ENCODE measurements at regions of chrX and their contacts with region 1.

Region 1: DNA sequence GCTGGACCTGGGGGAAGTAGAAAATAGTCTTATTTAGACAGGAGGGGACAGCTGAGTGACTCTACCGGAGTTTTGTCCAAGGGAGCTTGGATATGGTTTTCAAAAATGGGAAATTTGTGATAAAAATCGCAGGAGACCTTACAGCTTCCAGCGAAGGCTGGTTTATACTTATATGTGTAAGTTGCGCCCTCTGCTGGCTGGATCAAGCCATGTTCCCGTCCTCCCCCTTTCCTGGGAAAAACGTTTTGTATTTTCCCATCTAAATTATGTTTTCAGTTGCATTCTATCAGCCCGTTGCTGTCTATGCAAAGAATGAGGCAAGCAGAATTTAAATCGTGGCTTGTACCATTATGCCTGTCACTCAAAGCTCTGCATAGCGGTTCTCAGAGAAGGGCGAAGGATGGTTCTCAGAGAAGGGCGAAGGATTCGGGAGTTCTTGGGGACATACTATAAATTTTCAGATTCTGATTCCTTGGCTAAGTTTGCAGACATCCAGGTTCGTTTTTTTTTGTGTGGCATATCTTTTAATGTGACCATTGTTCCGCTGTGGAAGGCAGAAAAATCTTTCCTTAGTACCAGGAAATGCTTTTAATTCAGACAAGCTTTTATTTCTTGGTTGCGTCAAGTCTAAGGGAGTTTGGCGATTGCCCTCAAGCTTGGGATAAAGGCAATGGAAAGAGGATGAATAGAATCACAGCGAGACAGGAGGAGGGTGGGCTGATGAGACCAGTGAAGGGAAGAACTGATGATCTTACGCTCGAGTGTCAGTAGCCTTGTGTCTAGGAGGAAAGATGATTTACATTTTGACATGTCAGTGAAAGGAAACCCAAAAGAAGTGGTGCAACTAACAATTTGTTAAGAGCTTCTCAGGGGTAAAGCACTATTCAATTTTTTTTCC is 128.5 kb upstream of the ARX start:
- DNase-seq: peak in 6 of 9 donors; percentile 5 to 23 (median 12)
- ATAC-seq: no peak
- H3K4me3 ChIP-seq: no peak overlapping the region
- H3K4me3 Mint-ChIP-seq: peak overlapping the region in 1 of 10 donors; percentile 14
- H3K27ac ChIP-seq: no peak overlapping the region
- H3K27ac Mint-ChIP-seq: no peak overlapping the region
- H3K4me1 ChIP-seq: no peaks in the 10 kb centered on the region
- H3K4me1 Mint-ChIP-seq: peaks cover 0 to 7% (median 0%) of the 10 kb centered on the region in 7 donors
- H3K27me3 ChIP-seq: no peaks in the 10 kb centered on the region
- H3K27me3 Mint-ChIP-seq: peaks cover under 1 to 15% (median 5%) of the 10 kb centered on the region in 5 donors

Region 2: GRCh38 chrX:24100713-24101112 is 1043.6 kb before region 1 on chrX:
- CTCF ChIA-PET with region 1: no interaction called
- POLR2A ChIA-PET with region 1: no interaction called
- intact Hi-C with region 1: no loop called
- DNase-seq: no peak
- ATAC-seq: no peak
- H3K4me3 ChIP-seq: no peak overlapping the region
- H3K4me3 Mint-ChIP-seq: no peak overlapping the region
- H3K27ac ChIP-seq: no peak overlapping the region
- H3K27ac Mint-ChIP-seq: no peak overlapping the region
- H3K4me1 ChIP-seq: no peaks in the 10 kb centered on the region
- H3K4me1 Mint-ChIP-seq: peaks cover 0 to 13% (median 0%) of the 10 kb centered on the region in 7 donors
- H3K27me3 ChIP-seq: no peaks in the 10 kb centered on the region
- H3K27me3 Mint-ChIP-seq: no peaks in the 10 kb centered on the region

Region 3: DNA sequence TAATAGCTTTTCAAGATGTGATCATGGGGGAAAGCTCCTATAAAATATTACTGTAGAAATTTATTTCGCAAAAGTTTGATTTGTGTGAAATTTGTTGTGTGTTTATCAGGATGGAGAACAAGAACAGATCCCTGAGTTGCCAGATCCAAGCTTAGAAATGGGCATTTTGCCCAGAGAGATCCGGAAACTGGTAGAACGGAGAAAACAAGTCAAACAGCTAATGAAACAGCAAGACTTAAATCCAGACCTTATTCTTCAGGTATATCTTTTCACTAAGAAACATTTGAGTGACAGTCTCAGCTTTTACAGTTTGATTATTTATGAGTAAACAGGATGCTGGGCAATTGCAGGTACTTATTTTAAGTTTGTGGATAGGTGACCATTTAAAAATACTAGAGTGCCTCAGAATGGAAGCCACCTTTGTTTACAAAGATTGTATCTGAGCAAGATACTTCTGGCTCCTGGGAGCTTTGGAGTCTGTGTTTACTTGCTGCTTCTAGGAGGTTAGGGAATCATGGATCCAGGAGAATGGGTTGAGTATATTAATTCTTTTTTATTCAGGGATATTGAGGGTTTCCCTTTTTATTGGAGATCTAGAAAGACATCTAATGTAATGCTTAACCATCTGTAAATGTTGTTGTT is 396.0 kb before region 1 on chrX:
- CTCF ChIA-PET with region 1: interaction called, 4 read pairs
- POLR2A ChIA-PET with region 1: no interaction called
- intact Hi-C with region 1: loop called in 1 of 2 experiments (anchors 1 kb)
- DNase-seq: no peak
- ATAC-seq: no peak
- H3K4me3 ChIP-seq: no peak overlapping the region
- H3K4me3 Mint-ChIP-seq: no peak overlapping the region
- H3K27ac ChIP-seq: no peak overlapping the region
- H3K27ac Mint-ChIP-seq: no peak overlapping the region
- H3K4me1 ChIP-seq: no peaks in the 10 kb centered on the region
- H3K4me1 Mint-ChIP-seq: no peaks in the 10 kb centered on the region
- H3K27me3 ChIP-seq: no peaks in the 10 kb centered on the region
- H3K27me3 Mint-ChIP-seq: no peaks in the 10 kb centered on the region

Region 4: GRCh38 chrX:24838629-24839028 is 305.7 kb before region 1 on chrX:
- CTCF ChIA-PET with region 1: interaction called, 9 read pairs
- POLR2A ChIA-PET with region 1: no interaction called
- intact Hi-C with region 1: loop called in 1 of 2 experiments (anchors 1 kb)
- DNase-seq: peak in 4 of 9 donors; percentile 4 to 27 (median 18)
- ATAC-seq: no peak
- H3K4me3 ChIP-seq: no peak overlapping the region
- H3K4me3 Mint-ChIP-seq: no peak overlapping the region
- H3K27ac ChIP-seq: no peak overlapping the region
- H3K27ac Mint-ChIP-seq: no peak overlapping the region
- H3K4me1 ChIP-seq: no peaks in the 10 kb centered on the region
- H3K4me1 Mint-ChIP-seq: no peaks in the 10 kb centered on the region
- H3K27me3 ChIP-seq: no peaks in the 10 kb centered on the region
- H3K27me3 Mint-ChIP-seq: no peaks in the 10 kb centered on the region

Region 5: DNA sequence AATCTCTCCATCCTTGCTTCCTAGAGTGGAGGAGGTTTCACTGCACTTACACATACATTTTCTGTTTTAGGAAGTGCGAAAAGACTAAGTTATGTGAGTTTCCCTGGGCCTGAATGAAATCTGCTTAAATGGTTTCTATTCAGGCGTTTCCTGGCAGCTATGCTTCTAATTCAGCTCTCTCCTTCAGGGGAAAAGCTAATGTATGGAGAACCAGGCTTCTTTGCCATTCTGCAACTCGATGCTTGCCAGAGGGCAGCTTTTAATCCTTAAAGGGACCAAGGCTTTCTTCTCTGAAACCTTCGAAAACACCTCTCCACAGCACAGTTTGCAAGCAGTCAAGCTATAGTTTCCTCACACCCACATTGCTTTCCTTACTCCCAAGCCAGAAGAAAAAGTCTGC is 39.1 kb before region 1 on chrX:
- CTCF ChIA-PET with region 1: no interaction called
- POLR2A ChIA-PET with region 1: no interaction called
- intact Hi-C with region 1: no loop called
- DNase-seq: no peak
- ATAC-seq: no peak
- H3K4me3 ChIP-seq: no peak overlapping the region
- H3K4me3 Mint-ChIP-seq: no peak overlapping the region
- H3K27ac ChIP-seq: no peak overlapping the region
- H3K27ac Mint-ChIP-seq: no peak overlapping the region
- H3K4me1 ChIP-seq: no peaks in the 10 kb centered on the region
- H3K4me1 Mint-ChIP-seq: no peaks in the 10 kb centered on the region
- H3K27me3 ChIP-seq: no peaks in the 10 kb centered on the region
- H3K27me3 Mint-ChIP-seq: peaks cover 0 to 8% (median 0%) of the 10 kb centered on the region in 5 donors